ENCODE measurements at regions of chr4 and their contacts with region 1.

Region 1: GRCh38 chr4:81120055-81120454 is 89.5 kb downstream of the BMP3 start:
- DNase-seq: no peak

Region 2: GRCh38 chr4:81164623-81165416 is 44.8 kb after region 1 on chr4:
- in situ Hi-C with region 1: loop called (anchors 5 kb)
- DNase-seq: no peak